Esophagus muscularis mucosa (tissue), 4 donors: ENCODE measurements at regions of chr19 and their contacts with region 1.

Region 1: DNA sequence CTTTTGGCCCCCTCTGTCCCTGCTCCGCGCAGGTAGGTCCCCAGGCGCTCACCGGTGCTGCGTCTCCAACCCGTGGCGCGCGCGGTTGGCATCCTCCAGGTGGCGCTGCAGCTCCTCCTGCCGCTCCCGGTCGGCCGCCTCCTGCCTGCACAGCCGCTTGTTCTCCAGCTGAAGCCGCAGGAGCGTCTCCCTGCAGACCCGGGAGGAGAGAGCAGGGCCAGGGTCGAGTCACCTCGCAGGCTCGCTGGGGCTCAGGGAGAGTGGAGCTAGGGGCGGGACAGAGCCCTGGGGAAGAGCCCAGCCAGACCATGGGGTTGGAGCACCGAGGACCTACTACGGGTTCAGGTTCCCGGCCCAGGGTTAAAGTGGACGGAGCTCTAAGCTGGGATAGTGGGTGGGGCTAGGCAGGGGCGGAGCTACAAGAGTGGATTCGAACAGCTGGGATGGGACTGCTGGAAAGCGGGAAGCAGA is 9.3 kb downstream of the HOOK2 start:
- DNase-seq: no peak
- H3K4me3 ChIP-seq: peak overlapping the region; percentile 43 to 62 (median 52)
- H3K27ac ChIP-seq: peak overlapping the region; percentile 43 to 72 (median 56)
- H3K4me1 ChIP-seq: peaks cover 4 to 8% (median 6%) of the 10 kb centered on the region in 4 donors
- H3K27me3 ChIP-seq: no peaks in the 10 kb centered on the region
- CTCF ChIP-seq: peak; percentile 84 to 95 (median 94)
- EP300 ChIP-seq: no peak
- POLR2A ChIP-seq: no peak

Region 2: DNA sequence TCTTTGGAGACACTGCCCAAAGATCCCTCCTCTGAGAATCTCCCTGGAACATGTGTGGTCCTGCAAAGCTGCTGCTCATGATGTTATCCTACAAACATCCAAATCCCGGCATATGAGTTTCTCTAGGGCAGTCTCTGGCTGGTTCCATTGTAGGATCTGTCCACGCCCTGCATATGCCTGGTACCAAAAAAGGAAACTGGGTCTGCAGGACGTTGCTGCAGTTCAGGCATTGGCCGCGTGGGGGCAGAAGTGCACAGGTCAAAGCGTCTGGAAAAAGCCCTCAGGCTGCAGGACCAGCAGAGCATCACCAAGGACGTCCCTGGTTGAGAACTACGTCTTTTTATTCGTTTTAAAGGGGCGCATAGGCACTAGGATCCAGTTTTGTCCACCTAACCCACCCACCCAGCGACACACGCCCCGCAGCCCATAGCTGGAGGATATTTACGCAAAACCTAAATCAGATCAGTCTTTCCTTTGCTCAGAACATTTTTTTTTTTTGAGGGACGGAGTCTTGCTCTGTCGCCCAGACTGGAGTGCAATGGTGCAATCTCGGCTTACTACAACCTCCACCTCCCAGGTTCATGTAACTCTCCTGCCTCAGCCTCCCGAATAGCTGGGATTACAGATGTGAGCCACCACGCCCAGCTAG is 201.9 kb before region 1 on chr19:
- intact Hi-C with region 1: no loop called
- DNase-seq: peak; percentile 96
- H3K4me3 ChIP-seq: peak overlapping the region in 1 of 4 donors; percentile 22
- H3K27ac ChIP-seq: peak overlapping the region; percentile 32 to 71 (median 51)
- H3K4me1 ChIP-seq: peaks cover 7 to 9% (median 9%) of the 10 kb centered on the region in 4 donors
- H3K27me3 ChIP-seq: no peaks in the 10 kb centered on the region
- CTCF ChIP-seq: peak in 2 of 3 experiments; percentile 97 to 99
- EP300 ChIP-seq: no peak
- POLR2A ChIP-seq: no peak

Region 3: GRCh38 chr19:12617646-12618045 is 148.4 kb before region 1 on chr19:
- intact Hi-C with region 1: no loop called
- DNase-seq: no peak
- H3K4me3 ChIP-seq: no peak overlapping the region
- H3K27ac ChIP-seq: no peak overlapping the region
- H3K4me1 ChIP-seq: peaks cover 31 to 75% (median 64%) of the 10 kb centered on the region in 4 donors
- H3K27me3 ChIP-seq: no peaks in the 10 kb centered on the region
- CTCF ChIP-seq: no peak
- EP300 ChIP-seq: no peak
- POLR2A ChIP-seq: no peak

Region 4: GRCh38 chr19:12715102-12715501 is 51.0 kb before region 1 on chr19:
- intact Hi-C with region 1: no loop called
- DNase-seq: no peak
- H3K4me3 ChIP-seq: no peak overlapping the region
- H3K27ac ChIP-seq: no peak overlapping the region
- H3K4me1 ChIP-seq: peaks cover 12 to 30% (median 28%) of the 10 kb centered on the region in 4 donors
- H3K27me3 ChIP-seq: no peaks in the 10 kb centered on the region
- CTCF ChIP-seq: no peak
- EP300 ChIP-seq: no peak
- POLR2A ChIP-seq: no peak

Region 5: DNA sequence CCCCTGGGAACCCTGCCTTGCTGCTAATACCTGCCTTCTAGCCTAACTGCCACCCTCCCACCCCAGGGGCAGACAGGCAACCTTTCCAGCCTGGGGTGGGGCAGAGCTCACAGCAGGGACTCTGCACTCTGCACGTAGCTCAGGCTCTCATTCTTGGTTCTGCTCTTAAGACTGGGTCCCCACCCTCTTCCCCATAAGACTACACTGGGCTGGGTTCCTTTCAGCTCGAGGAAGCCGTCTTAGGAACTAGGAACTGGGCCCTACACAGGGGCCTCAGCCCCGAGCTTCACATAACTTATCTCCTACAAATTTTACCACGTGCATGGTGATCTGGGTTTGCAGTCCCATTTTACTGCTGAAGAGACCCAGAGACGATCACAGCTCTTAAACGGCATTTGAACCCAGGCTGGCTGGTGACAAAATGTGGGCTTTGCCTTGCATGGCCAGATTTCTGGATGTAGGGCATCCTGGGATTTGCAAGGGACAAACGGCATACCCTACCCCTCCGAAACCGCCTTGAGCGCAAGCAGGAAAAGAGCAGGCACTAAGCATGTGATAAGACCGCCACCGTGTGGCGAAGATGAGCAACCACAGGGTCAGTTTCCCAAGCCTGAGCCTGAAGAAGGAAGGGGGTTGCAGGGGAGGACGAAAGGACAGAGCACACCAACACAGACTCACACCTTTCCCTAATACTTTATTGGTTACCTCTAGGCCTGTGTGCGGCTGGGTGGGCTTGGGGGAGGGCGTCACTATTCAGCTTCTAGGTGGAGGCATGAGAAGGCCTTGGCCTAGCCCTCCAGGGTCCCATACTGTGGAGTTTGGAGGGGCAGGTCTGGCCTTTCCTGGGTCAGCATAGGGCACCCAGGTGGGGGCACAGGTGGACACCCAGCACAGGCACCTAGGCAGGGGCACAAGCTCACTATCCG is 30.3 kb after region 1 on chr19:
- intact Hi-C with region 1: loop called (anchors 5 kb)
- DNase-seq: no peak
- H3K4me3 ChIP-seq: peak overlapping the region in 1 of 4 donors; percentile 18
- H3K27ac ChIP-seq: peak overlapping the region; percentile 63 to 99 (median 84)
- H3K4me1 ChIP-seq: peaks cover 27 to 43% (median 38%) of the 10 kb centered on the region in 4 donors
- H3K27me3 ChIP-seq: no peaks in the 10 kb centered on the region
- CTCF ChIP-seq: peak; percentile 95 to 99 (median 95)
- EP300 ChIP-seq: no peak
- POLR2A ChIP-seq: peak; percentile 2

Region 6: GRCh38 chr19:12847159-12848139 is 81.4 kb after region 1 on chr19:
- intact Hi-C with region 1: loop called (anchors 2 kb)
- DNase-seq: peak; percentile 95
- H3K4me3 ChIP-seq: peak overlapping the region; percentile 19 to 46 (median 30)
- H3K27ac ChIP-seq: no peak overlapping the region
- H3K4me1 ChIP-seq: peaks cover 8 to 12% (median 11%) of the 10 kb centered on the region in 4 donors
- H3K27me3 ChIP-seq: peaks cover 0 to 47% (median 9%) of the 10 kb centered on the region in 4 donors
- CTCF ChIP-seq: peak in 2 of 3 experiments; percentile 99
- EP300 ChIP-seq: no peak
- POLR2A ChIP-seq: no peak

Region 7: DNA sequence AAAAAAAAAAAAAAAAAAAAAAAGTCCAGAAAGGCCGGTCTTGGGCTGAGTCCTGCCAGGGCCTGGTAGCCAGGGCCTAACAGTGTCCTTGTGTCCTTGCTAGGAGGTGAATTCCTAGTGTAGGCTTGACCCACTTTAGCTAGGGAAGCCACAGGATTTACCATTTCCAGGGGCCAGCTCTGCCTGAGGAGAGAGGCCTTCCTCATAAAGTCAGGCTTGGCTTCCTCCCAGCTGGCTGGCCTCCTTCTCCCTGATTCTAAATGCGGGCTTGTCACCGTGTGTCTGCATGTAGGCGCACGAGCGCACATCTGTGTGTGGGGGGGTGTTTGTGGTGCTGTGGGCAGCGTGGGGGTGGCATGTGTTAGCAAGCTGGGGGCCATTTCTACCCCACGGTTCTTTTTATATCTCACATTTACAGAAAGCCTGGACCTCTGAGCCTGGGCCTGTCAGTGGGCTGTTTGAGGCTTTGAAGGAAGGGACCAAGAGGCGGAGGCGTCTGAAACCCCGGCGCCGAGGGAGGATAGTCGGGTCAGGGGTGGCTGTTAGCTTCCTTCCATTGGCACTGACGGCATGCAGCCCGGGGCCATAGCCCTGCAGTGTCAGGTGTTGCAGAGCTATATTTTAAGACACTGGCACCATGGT is 415.8 kb after region 1 on chr19:
- intact Hi-C with region 1: no loop called
- DNase-seq: no peak
- H3K4me3 ChIP-seq: no peak overlapping the region
- H3K27ac ChIP-seq: peak overlapping the region; percentile 28 to 51 (median 36)
- H3K4me1 ChIP-seq: peaks cover 9 to 15% (median 14%) of the 10 kb centered on the region in 4 donors
- H3K27me3 ChIP-seq: no peaks in the 10 kb centered on the region
- CTCF ChIP-seq: no peak
- EP300 ChIP-seq: no peak
- POLR2A ChIP-seq: no peak